ENCODE measurements at regions of chr11 and their contacts with region 1.

Region 1: GRCh38 chr11:60899046-60899936 is 7.1 kb downstream of the PRPF19 start:
- H3K4me3 ChIP-seq: no peak overlapping the region
- H3K27ac ChIP-seq: no peak overlapping the region
- H3K4me1 ChIP-seq: no peaks in the 10 kb centered on the region
- CTCF ChIP-seq: no peak

Region 2: DNA sequence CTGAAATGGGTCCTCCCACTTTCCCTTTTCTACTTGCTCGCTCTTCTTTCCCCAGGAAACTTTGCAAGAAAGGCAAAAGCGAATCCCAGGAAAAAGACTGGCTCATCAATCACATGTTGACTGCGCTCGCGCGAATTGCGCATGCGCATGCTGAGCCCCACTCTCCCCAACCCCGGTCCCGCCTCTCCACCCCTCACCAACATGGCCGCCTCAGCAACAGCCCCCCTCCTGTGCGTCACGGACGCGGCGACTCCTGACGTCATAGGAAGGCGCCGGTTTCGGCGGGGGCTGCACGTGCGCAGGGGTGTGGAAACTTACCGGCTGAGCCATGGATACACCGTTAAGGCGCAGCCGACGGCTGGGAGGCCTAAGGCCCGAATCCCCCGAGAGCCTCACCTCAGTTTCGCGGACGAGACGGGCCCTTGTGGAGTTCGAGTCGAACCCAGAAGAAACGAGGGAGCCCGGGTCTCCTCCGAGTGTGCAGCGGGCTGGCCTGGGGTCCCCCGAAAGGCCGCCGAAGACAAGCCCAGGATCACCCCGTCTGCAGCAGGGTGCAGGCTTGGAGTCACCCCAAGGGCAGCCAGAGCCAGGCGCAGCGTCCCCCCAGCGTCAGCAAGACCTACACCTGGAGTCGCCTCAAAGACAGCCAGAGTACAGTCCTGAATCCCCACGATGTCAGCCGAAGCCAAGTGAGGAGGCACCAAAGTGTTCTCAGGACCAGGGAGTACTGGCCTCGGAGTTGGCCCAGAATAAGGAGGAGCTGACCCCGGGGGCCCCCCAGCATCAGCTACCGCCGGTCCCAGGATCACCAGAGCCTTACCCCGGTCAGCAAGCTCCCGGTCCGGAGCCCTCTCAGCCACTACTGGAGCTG is 57.3 kb before region 1 on chr11 and contains the start of gene CCDC86:
- CTCF ChIA-PET with region 1: interaction called, 17 read pairs
- POLR2A ChIA-PET with region 1: no interaction called
- H3K4me3 ChIP-seq: peak within 1 kb of the TSS; percentile 88
- H3K27ac ChIP-seq: peak within 1 kb of the TSS; percentile 44
- H3K4me1 ChIP-seq: no peaks in the 10 kb centered on the region
- CTCF ChIP-seq: no peak

Region 3: DNA sequence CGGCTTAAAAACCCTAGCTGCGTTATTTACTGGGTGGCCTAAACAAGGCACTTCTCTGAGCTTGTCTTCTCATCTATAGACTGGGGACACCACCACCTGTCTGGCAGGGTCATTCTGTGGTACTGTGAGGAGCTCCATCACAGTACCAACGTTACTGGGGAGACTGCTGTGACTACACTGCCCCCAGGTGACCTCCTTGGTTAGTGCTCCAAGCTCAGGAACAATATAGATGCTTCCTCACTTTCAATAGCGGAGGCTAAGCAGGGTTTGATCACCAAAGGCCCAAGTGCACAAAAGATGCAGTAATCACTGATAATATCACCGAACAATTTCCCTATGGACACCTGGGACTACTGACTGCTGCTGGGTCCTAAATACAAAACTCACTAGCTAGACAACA is 11.7 kb before region 1 on chr11:
- CTCF ChIA-PET with region 1: interaction called, 40 read pairs
- POLR2A ChIA-PET with region 1: interaction called, 3 read pairs
- H3K4me3 ChIP-seq: no peak overlapping the region
- H3K27ac ChIP-seq: no peak overlapping the region
- H3K4me1 ChIP-seq: no peaks in the 10 kb centered on the region
- CTCF ChIP-seq: 0 out of 2 replicates have a peak, but pooled peaks have one; percentile 8

Region 4: GRCh38 chr11:60913793-60914632 is 14.7 kb after region 1 on chr11 and contains the start of gene TMEM109:
- CTCF ChIA-PET with region 1: interaction called, 30 read pairs
- POLR2A ChIA-PET with region 1: interaction called, 36 read pairs
- H3K4me3 ChIP-seq: peak within 1 kb of the TSS; percentile 55
- H3K27ac ChIP-seq: peak within 1 kb of the TSS; percentile 61
- H3K4me1 ChIP-seq: no peaks in the 10 kb centered on the region
- CTCF ChIP-seq: no peak